Dendritic cell treated with granulocyte-macrophage colony-stimulating factor and Interleukin-4, amounts not matched to agents 40 ng/mL and 50 ng/mL, for 4 days (primary cell): ENCODE measurements at regions of chr1 and their contacts with region 1.

Region 1: DNA sequence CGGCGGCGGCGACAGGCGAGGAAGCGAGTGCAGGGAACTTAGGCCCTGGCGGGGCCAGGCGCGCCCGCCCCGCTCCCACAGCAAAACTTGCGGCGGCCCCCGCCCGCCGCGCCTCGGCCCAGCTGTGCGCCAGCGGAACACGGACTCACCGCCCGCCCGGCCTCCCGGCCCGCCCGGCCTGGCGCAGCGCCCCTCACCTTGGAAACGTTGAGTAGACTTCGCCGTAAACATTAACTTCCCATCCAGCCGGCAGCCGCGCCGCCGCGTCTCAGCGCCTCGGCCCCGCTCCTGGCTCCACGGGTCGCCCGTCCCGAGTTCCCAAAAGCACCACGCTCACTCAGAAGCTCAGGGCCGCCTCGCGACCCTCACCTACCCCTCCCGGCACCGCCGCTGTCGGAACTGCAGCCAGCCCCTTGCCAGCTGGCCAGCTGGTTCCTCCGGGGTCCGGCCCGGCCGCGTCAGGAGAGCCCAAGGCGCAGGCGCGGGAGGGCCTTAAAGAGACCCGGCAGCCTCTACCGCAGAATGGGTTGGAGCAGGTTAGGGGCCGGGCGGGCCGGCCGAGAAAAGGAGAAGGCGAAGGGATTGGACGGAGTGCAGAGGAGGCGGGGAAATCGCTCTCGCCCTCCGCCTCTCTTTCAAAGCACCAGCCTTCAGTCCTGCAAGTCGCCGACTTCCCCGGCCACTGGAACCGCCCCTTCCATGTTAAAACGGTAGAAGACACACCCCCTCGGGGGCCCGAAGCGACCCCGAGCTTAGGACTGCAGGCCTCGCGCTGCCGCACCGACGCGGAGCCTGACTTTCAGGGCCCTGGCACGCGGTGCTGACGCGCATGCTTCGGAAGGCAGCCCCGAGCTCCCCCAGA is at the start of gene EVI5:
- H3K4me3 Mint-ChIP-seq: peak within 1 kb of the TSS; percentile 90
- H3K27ac Mint-ChIP-seq: peak within 1 kb of the TSS; percentile 97
- H3K4me1 Mint-ChIP-seq: peaks cover 40% of the 10 kb centered on the region
- H3K27me3 Mint-ChIP-seq: no peaks in the 10 kb centered on the region

Region 2: DNA sequence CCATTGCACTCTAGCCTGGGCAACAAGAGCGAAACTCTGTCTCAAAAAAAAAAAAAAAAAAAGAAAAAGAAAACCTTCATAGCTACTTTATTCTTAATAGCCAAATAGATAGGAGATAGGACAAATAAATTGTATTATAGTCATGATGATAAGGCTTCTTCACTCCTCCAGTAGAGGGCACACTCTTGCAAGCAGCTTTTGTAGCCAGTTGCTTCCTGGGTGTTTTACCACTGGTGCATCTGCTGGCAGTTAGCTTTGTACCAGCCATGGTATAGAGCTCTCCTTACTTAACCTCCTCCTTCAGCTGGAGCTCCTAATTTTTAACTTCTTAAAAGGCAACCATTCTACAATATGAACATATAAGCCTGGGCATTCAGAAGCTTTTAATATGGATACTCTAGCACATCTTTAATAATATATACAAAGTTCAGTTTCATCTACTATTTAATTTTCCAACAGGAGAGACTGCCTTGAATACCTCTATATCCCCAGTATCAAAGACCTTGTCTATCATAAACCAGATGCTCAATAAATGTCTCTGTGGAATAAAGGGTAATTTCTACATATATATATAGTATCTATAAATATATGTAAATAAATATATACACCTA is 35.7 kb before region 1 on chr1:
- intact Hi-C with region 1: loop called (anchors 5 kb)
- H3K4me3 Mint-ChIP-seq: no peak overlapping the region
- H3K27ac Mint-ChIP-seq: no peak overlapping the region
- H3K4me1 Mint-ChIP-seq: peaks cover 26% of the 10 kb centered on the region
- H3K27me3 Mint-ChIP-seq: no peaks in the 10 kb centered on the region

Region 3: DNA sequence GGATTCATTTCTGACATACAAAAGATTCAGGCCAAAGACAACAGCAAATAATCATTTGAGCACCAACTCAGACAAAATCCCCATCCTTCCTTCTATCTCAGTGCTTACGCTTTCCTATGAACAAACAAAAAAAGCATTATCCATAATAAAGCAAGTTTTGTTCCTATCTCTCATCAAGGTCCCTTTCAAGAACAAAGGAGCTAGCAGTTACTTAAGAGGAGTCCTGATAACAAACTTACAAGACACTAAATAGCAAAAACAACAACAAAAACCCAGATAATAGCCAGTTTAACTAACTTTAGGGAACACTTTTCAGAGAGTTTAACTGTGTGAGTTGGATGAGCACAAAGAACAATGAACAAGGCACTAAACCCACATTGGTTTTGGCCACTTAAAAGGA is 10.5 kb before region 1 on chr1:
- intact Hi-C with region 1: no loop called
- H3K4me3 Mint-ChIP-seq: no peak overlapping the region
- H3K27ac Mint-ChIP-seq: no peak overlapping the region
- H3K4me1 Mint-ChIP-seq: peaks cover 28% of the 10 kb centered on the region
- H3K27me3 Mint-ChIP-seq: no peaks in the 10 kb centered on the region

Region 4: DNA sequence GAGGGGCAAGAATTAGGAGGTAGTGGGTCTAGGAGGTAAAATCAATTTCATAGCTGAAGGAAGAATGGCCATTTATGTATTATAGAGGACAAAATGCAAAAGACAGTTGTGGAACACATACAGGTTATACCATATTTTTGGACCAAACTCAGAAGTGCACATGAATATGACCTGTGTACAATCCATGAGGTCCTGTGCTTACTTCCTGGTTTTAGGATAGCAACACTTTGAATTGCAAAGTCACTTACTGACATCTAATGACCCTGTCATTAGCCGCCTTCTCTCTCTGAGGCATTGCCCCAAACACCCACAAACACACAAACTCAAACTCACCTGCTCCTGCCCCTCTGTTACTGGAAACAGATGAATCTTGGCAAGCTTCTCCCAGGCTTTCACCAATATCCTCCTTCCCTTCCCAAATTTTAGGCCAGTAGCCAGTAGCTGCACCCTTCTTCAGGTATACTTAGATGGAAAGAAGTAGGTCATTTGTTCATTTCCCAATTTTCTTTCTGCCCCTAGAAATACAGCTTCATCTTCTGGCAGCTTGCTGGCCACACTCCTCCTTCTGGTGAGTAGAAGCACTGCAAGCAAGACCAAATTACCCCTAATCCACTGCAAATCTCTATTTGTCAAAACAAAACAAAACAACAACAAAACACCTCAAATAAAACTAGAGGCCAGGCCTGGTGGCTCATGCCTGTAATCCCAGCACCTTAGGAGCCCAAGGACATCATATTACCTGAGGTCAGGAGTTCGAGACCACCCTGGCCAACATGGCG is 33.3 kb after region 1 on chr1:
- intact Hi-C with region 1: loop called (anchors 5 kb)
- H3K4me3 Mint-ChIP-seq: no peak overlapping the region
- H3K27ac Mint-ChIP-seq: no peak overlapping the region
- H3K4me1 Mint-ChIP-seq: peaks cover 21% of the 10 kb centered on the region
- H3K27me3 Mint-ChIP-seq: no peaks in the 10 kb centered on the region

Region 5: GRCh38 chr1:92831762-92832536 is 47.1 kb after region 1 on chr1 and contains the start of gene RPL5:
- intact Hi-C with region 1: loop called (anchors 2 kb)
- H3K4me3 Mint-ChIP-seq: peak within 1 kb of the TSS; percentile 98
- H3K27ac Mint-ChIP-seq: peak within 1 kb of the TSS; percentile 96
- H3K4me1 Mint-ChIP-seq: peaks cover 17% of the 10 kb centered on the region
- H3K27me3 Mint-ChIP-seq: no peaks in the 10 kb centered on the region

Region 6: DNA sequence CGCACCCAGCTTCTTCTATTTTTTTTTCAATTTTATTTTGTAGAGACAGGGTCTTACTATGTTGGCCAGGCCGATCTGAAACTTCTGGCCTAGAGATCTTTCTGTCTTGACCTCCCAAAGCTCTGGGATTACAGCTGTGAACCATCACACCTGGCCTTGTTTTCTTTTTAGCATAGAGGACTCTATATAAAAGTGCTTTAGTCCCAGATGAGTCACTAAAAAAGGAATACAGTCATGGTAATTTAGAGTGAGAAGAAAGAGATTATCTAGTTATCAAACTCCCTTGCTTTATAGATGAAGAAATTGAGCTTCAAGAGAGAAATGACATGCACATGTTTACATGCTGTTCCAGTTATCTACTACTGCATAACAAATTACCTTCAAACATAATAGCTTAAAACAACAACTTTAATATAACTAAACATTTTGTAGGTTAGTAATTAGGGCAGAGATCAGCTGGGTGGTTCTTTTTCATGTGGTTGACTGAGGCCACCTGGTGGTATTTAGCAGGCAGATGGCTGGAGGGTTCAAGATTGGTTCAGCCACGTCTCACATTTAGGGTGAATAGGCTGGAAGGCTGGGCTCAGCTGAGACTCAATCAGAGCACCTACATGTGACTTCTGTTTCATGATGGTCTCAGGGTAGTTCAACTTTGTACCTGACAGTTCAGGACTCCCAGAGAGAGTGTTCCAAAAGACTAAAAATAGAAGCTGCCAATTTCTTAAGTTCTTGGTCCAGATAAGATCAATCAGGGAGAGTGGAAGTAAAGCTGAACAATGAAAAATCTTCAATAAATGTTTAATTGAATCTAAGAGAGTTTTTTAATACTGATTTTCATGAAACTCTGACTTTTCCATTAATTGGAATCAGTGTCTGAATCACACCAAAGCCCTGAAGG is 277.3 kb after region 1 on chr1:
- intact Hi-C with region 1: no loop called
- H3K4me3 Mint-ChIP-seq: no peak overlapping the region
- H3K27ac Mint-ChIP-seq: no peak overlapping the region
- H3K4me1 Mint-ChIP-seq: no peaks in the 10 kb centered on the region
- H3K27me3 Mint-ChIP-seq: peaks cover 11% of the 10 kb centered on the region